ENCODE measurements at regions of chr20 and their contacts with region 1.

Region 1: DNA sequence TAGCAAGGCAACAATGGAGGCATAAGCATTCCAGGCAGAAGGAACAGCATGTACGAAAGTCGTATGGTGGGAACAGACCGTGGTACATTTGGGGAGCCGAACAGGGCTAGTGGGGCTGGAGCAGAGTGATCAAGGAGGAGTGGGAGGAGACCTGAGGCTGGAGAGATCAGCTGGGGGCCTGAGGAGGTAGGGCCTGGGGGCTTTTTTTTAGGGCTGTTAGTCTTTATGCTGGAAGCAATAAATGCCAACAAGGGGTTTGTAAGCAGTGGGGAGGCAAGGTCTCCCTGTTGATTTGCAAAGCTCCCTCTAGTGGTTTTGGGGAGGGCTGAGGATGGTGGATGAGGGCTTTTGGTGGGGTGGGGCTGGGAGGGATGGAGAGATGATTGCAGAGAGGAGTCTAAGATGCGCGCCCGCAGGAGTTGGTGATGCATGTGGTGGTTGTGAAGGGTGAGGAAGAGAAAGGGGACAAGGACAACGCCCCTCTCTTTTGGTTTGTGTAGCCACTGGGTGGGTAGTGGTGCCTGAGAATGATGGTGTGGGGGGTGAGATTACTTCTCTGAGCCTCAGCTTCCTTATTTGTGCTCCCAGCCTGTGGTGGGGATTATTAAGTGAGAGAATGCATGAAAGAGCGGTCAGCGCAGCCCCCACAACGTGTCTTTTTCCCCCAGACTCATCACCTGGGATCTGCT is 74.1 kb upstream of the TOX2 start:
- H3K4me3 ChIP-seq: no peak overlapping the region
- H3K27ac ChIP-seq: no peak overlapping the region
- H3K4me1 ChIP-seq: no peaks in the 10 kb centered on the region
- CTCF ChIP-seq: peak; percentile 19; the same call in 1 of the 2 replicates

Region 2: DNA sequence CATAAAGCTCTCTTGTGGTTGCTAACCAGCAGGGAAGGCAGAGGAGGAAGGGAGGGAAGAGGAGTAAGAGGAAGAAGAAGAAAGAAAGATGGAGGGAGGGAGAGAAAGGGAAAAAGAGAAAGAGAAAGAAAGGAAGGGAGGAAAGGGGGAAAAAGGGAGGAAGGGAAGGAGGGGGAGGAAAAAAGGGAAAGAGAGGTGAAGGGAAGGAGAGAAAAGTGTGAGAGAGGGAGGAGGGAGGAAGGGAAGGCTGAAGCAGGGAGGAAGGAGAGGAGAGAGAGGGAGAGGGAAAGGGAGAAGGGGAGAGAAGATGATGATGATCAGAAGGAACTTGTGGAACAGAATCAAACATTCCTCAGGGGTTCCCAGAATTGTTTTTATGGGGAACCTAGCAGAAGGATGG is 16.6 kb after region 1 on chr20:
- CTCF ChIA-PET with region 1: interaction called, 11 read pairs
- POLR2A ChIA-PET with region 1: no interaction called
- H3K4me3 ChIP-seq: no peak overlapping the region
- H3K27ac ChIP-seq: no peak overlapping the region
- H3K4me1 ChIP-seq: no peaks in the 10 kb centered on the region
- CTCF ChIP-seq: no peak